ENCODE measurements at regions of chr11 and their contacts with region 1.

Region 1: GRCh38 chr11:118216621-118217481 is 8.0 kb downstream of the JAML start:
- DNase-seq: no peak
- H3K4me3 ChIP-seq: no peak overlapping the region
- H3K4me3 Mint-ChIP-seq: no peak overlapping the region
- H3K27ac Mint-ChIP-seq: peak overlapping the region; percentile 67
- H3K4me1 ChIP-seq: peaks cover 59% of the 10 kb centered on the region
- H3K4me1 Mint-ChIP-seq: peaks cover 42% of the 10 kb centered on the region
- H3K27me3 ChIP-seq: no peaks in the 10 kb centered on the region
- H3K27me3 Mint-ChIP-seq: no peaks in the 10 kb centered on the region
- CTCF ChIP-seq: no peak

Region 2: GRCh38 chr11:117570701-117571100 is 646.1 kb before region 1 on chr11:
- CTCF ChIA-PET with region 1: no interaction called
- POLR2A ChIA-PET with region 1: no interaction called
- intact Hi-C with region 1: no loop called
- DNase-seq: no peak
- H3K4me3 ChIP-seq: no peak overlapping the region
- H3K4me3 Mint-ChIP-seq: no peak overlapping the region
- H3K27ac Mint-ChIP-seq: no peak overlapping the region
- H3K4me1 ChIP-seq: no peaks in the 10 kb centered on the region
- H3K4me1 Mint-ChIP-seq: no peaks in the 10 kb centered on the region
- H3K27me3 ChIP-seq: no peaks in the 10 kb centered on the region; the same call in none of the 2 replicates
- H3K27me3 Mint-ChIP-seq: peaks cover 20% of the 10 kb centered on the region
- CTCF ChIP-seq: no peak

Region 3: GRCh38 chr11:118152552-118153471 is 64.0 kb before region 1 on chr11 and contains the start of gene SCN4B:
- CTCF ChIA-PET with region 1: no interaction called
- POLR2A ChIA-PET with region 1: interaction called, 11 read pairs
- intact Hi-C with region 1: no loop called
- DNase-seq: peak; percentile 71 to 78
- H3K4me3 ChIP-seq: peak within 1 kb of the TSS; percentile 37
- H3K4me3 Mint-ChIP-seq: peak within 1 kb of the TSS; percentile 66
- H3K27ac Mint-ChIP-seq: no peak within 1 kb of the TSS
- H3K4me1 ChIP-seq: 0 out of 2 replicates have a peak, but pooled peaks cover 10% of the 10 kb centered on the region
- H3K4me1 Mint-ChIP-seq: no peaks in the 10 kb centered on the region
- H3K27me3 ChIP-seq: peaks cover 5% of the 10 kb centered on the region
- H3K27me3 Mint-ChIP-seq: peaks cover 33% of the 10 kb centered on the region
- CTCF ChIP-seq: no peak
- total RNA-seq, gene SCN4B: 0.70 TPM in 2 replicates

Region 4: DNA sequence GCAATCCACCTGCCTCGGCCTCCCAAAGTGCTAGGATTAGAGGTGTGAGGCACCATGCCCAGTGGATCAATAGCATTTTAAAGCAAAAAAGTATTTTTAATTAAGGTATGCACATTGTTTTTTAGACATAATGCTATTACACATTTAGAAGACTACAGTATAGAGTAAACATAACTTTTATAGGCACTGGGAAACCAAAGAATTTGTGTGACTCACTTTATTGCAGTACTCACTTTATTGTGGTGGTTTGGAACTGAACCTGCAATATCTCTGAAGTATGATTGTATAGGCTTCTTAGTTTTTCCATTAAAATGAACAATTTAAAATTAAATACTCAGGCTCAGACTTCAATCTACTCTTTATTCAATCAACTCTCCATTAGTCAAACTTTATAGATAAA is 70.2 kb after region 1 on chr11:
- CTCF ChIA-PET with region 1: no interaction called
- POLR2A ChIA-PET with region 1: no interaction called
- intact Hi-C with region 1: no loop called
- DNase-seq: no peak
- H3K4me3 ChIP-seq: no peak overlapping the region
- H3K4me3 Mint-ChIP-seq: no peak overlapping the region
- H3K27ac Mint-ChIP-seq: no peak overlapping the region
- H3K4me1 ChIP-seq: peaks cover 15% of the 10 kb centered on the region
- H3K4me1 Mint-ChIP-seq: peaks cover 16% of the 10 kb centered on the region
- H3K27me3 ChIP-seq: no peaks in the 10 kb centered on the region
- H3K27me3 Mint-ChIP-seq: no peaks in the 10 kb centered on the region
- CTCF ChIP-seq: no peak

Measured in Caco-2 (cell line).